Breast epithelium (tissue), 4 donors: ENCODE measurements at regions of chr2 and their contacts with region 1.

Region 1: DNA sequence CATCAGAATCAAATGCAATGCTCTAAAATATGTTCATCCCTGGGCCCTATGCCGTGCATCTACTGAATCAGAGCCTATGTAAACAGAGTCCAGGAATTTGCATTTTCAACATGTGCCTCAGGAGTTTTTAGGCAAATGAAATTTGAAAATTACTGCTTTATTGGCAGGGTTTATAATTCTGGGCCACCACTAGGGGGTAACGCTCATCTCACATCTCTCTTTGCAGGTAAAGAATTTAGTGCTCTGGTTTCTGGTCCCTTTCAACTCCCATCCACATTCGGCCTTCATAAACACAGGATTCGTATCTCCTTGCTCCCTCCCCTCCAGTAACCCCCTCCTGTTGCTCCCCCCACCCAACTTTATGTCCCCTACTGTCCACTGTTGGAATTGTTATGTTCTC is 49.3 kb downstream of the LYPD6B start:
- DNase-seq: no peak
- H3K4me3 ChIP-seq: no peak overlapping the region
- H3K27ac ChIP-seq: no peak overlapping the region
- H3K4me1 ChIP-seq: no peaks in the 10 kb centered on the region
- H3K27me3 ChIP-seq: no peaks in the 10 kb centered on the region
- CTCF ChIP-seq: peak in 2 of 3 donors; percentile 17 to 26
- POLR2A ChIP-seq: no peak

Region 2: GRCh38 chr2:151009437-151010175 is 1921.9 kb after region 1 on chr2:
- intact Hi-C with region 1: loop called (anchors 5 kb)
- DNase-seq: no peak
- H3K4me3 ChIP-seq: no peak overlapping the region
- H3K27ac ChIP-seq: no peak overlapping the region
- H3K4me1 ChIP-seq: no peaks in the 10 kb centered on the region
- H3K27me3 ChIP-seq: no peaks in the 10 kb centered on the region
- CTCF ChIP-seq: no peak
- POLR2A ChIP-seq: no peak